Psoas muscle (tissue), 8 donors: ENCODE measurements at regions of chrX and their contacts with region 1.

Region 1: GRCh38 chrX:58025979-58026378 is 115.7 kb upstream of the ZXDA start:
- DNase-seq: no peak
- ATAC-seq: peak in 1 of 4 donors; percentile 51
- H3K4me3 ChIP-seq: no peak overlapping the region
- H3K27ac ChIP-seq: no peak overlapping the region
- H3K4me1 ChIP-seq: no peaks in the 10 kb centered on the region
- H3K27me3 ChIP-seq: peaks cover 0 to 4% (median 0%) of the 10 kb centered on the region in 3 donors
- CTCF ChIP-seq: peak; percentile 64

Region 2: DNA sequence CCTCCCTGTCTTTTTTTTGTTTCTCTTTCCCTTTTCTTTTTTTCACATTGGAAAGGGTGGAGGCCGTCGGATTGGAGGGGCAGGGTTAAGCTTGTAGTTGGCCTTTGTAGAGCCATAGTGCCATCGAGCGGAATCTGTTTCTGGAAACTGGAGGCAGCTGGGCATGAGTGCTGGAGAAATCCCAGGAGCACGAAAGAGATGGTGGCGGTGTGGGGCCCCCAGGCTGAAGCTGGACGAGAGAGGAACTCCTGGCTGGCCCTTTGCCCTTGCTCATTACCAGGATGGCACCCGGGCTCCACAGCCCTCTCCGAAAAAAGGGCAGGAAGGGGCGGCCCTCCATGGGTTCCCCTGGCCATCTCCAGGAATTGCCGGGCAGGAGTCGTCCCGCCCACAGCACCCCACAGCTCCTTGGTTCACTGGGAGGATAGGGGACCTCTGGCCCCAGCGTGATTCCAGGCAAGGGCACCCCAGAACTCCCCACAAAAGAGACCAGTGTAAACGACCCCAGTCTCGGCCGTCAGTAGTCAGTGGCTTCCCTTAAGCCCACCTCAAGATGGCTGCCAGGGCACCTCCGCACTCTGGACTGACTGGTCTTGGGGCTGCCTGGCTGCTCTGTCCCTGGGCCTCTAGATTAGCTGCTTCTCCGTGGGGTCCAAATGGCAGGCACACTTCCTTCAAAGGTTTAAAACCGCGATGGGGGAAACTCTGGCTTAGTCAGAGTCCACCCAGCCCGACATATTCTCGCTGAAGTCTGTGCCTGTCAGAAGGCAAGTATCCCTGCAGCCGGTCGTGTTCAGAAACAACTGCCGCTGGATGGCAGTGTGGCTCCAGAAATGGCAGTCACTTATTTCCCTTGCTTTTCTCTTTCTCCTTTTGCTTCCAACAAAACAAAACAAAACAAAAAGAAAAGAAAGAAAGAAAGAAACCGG is 1222.8 kb before region 1 on chrX:
- intact Hi-C with region 1: loop called in 1 of 2 experiments (anchors 10 kb)
- DNase-seq: peak; percentile 83 to 94
- ATAC-seq: peak; percentile 73 to 84 (median 76)
- H3K4me3 ChIP-seq: peak overlapping the region; percentile 84
- H3K27ac ChIP-seq: peak overlapping the region; percentile 92
- H3K4me1 ChIP-seq: peaks cover 29% of the 10 kb centered on the region
- H3K27me3 ChIP-seq: no peaks in the 10 kb centered on the region
- CTCF ChIP-seq: peak; percentile 70

Region 3: GRCh38 chrX:57573754-57574153 is 452.2 kb before region 1 on chrX:
- intact Hi-C with region 1: loop called in 1 of 2 experiments (anchors 10 kb)
- DNase-seq: no peak
- ATAC-seq: no peak
- H3K4me3 ChIP-seq: no peak overlapping the region
- H3K27ac ChIP-seq: no peak overlapping the region
- H3K4me1 ChIP-seq: no peaks in the 10 kb centered on the region
- H3K27me3 ChIP-seq: peaks cover 0 to 7% (median 0%) of the 10 kb centered on the region in 3 donors
- CTCF ChIP-seq: peak; percentile 37

Region 4: GRCh38 chrX:57821703-57822375 is 204.1 kb before region 1 on chrX:
- intact Hi-C with region 1: loop called (anchors 5 kb)
- DNase-seq: no peak
- ATAC-seq: peak; percentile 79 to 97 (median 83)
- H3K4me3 ChIP-seq: peak overlapping the region; percentile 59
- H3K27ac ChIP-seq: no peak overlapping the region
- H3K4me1 ChIP-seq: no peaks in the 10 kb centered on the region
- H3K27me3 ChIP-seq: peaks cover 0 to 20% (median 0%) of the 10 kb centered on the region in 3 donors
- CTCF ChIP-seq: peak; percentile 72

Region 5: DNA sequence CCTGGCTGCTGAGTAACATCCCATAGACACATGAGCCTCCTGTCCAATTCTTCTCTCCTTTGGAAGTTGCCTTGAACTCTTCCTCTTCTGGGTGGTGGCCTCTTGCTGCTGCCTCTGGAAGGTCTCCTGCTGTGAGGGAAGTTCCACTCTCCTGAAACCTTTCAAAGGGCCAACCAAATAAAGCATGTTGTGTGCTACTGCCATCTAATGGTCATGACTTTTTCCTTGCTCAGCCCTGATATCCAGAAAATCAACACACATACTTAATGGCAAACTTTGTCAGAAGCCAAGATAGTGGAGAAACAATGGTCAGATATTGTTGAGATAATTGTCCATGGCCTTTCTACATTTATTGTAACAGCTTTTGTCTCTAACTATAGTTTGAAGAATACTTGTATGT is 96.6 kb before region 1 on chrX:
- intact Hi-C with region 1: loop called in 1 of 2 experiments (anchors 2 kb)
- DNase-seq: no peak
- ATAC-seq: peak in 3 of 4 donors; percentile 48 to 67 (median 60)
- H3K4me3 ChIP-seq: no peak overlapping the region
- H3K27ac ChIP-seq: no peak overlapping the region
- H3K4me1 ChIP-seq: no peaks in the 10 kb centered on the region
- H3K27me3 ChIP-seq: no peaks in the 10 kb centered on the region
- CTCF ChIP-seq: peak; percentile 55